Naive thymus-derived CD8-positive, alpha-beta T cell (primary cell): ENCODE measurements at regions of chr6 and their contacts with region 1.

Region 1: GRCh38 chr6:39309942-39310531 is 4.2 kb downstream of the KCNK17 start:
- DNase-seq: peak in 9 of 10 donors; percentile 16 to 71 (median 35)
- ATAC-seq: peak; percentile 46 to 50
- H3K4me3 Mint-ChIP-seq: no peak overlapping the region
- H3K27ac Mint-ChIP-seq: no peak overlapping the region
- H3K4me1 Mint-ChIP-seq: peaks cover under 1 to 12% (median 5%) of the 10 kb centered on the region in 4 donors
- H3K27me3 Mint-ChIP-seq: peaks cover 14 to 38% (median 33%) of the 10 kb centered on the region in 5 donors

Region 2: DNA sequence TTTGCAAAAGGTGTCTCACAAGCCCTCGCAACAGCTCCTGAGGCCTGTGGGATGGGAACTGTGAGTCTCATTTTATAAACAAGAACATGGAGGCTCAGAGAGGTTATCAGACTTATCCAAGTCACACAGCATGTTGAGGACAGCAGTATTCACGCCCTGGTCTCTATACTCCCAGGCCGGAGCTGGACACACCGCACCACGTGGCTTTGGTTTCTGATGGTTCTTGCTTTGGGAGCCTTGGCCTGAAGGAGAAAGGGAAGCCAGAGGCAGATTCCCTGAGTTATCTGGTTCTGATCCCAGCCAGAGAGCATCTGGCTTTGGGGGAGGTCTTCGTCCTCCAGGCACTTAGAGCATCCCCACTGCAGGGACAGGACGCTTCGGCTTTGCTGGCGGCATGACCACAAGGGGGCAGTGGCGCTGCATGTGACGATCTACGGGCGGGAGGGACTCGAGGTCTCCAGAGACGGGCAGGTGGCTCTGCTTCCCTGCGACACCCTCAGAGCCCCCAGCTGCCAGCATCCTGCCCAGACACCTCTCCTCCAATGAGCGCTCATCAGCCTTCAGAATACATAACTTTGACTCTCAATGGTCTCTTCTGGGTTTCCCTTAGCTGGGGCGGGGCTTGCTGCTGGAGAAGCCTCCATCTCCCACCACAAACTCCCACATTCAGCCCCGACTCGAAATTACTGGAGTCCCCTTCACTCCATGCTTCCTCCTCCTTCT is 143.7 kb before region 1 on chr6:
- POLR2A ChIA-PET with region 1: interaction called, 12 read pairs
- DNase-seq: peak; percentile 53 to 88 (median 76)
- ATAC-seq: peak; percentile 87 to 92
- H3K4me3 Mint-ChIP-seq: peak overlapping the region in 2 of 10 donors; percentile 8 to 22
- H3K27ac Mint-ChIP-seq: peak overlapping the region in 1 of 10 donors; percentile 40
- H3K4me1 Mint-ChIP-seq: peaks cover 0 to 5% (median 4%) of the 10 kb centered on the region in 4 donors
- H3K27me3 Mint-ChIP-seq: peaks cover 0 to 11% (median 1%) of the 10 kb centered on the region in 5 donors

Region 3: DNA sequence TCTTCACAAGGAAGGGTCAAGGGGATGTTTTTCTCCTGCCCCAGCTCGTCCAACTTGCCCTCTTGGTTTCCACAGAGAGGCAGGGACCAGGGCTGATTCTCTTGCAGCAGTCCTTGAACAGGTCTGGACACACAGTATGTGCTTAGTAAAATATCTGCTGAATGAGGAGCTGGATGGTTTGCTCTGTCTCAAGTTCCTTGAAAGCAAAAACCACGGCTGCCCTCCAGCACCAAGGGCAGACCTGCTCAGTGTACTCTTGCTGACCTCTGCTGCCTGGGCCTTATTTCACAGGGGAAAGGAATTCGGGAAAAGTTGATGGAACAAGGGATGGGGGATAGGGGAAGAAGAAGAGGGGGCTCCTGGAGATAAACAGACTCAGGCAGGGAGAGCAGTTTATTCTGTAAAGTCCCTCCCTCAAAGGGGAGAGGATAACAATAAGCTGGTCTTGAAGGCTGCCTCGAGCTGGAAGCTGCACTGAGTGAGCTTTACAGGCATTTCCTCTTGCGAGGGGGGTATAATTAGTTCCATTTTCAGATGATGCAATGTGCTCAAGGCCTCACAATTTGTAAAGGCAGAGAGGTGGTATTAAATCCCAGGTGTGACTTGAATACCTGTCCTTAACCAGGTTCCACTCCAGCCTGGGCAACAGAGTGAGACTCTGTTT is 91.0 kb before region 1 on chr6:
- POLR2A ChIA-PET with region 1: no interaction called
- DNase-seq: no peak
- ATAC-seq: no peak
- H3K4me3 Mint-ChIP-seq: peak overlapping the region in 1 of 10 donors; percentile 26
- H3K27ac Mint-ChIP-seq: no peak overlapping the region
- H3K4me1 Mint-ChIP-seq: peaks cover 0 to 12% (median 3%) of the 10 kb centered on the region in 4 donors
- H3K27me3 Mint-ChIP-seq: no peaks in the 10 kb centered on the region

Region 4: DNA sequence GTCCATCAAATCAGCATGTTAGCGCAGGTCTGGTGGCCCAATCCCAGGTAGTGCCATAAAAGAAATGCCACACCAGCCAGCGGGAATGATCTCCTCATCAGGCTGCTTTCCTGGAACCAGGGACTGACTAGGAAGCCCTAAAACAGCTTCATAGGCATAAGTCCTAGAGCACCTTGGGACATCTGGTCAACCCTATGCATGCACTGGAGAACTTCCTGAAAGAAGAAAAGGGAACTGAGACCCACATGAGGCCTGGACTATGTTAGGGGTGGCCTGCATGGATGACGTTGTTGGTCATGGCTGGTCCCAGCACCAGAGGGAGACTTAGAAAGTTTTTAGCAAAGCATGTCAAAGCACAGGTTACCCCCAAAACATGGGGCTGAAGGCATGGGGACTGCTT is 20.0 kb after region 1 on chr6:
- POLR2A ChIA-PET with region 1: no interaction called
- DNase-seq: no peak
- ATAC-seq: no peak
- H3K4me3 Mint-ChIP-seq: no peak overlapping the region
- H3K27ac Mint-ChIP-seq: no peak overlapping the region
- H3K4me1 Mint-ChIP-seq: peaks cover 0 to 9% (median 4%) of the 10 kb centered on the region in 4 donors
- H3K27me3 Mint-ChIP-seq: peaks cover 7 to 52% (median 19%) of the 10 kb centered on the region in 5 donors